CD4-positive, alpha-beta T cell (primary cell): ENCODE measurements at regions of chr9 and their contacts with region 1.

Region 1: GRCh38 chr9:124940693-124941453 is at the start of gene GOLGA1:
- DNase-seq: peak; percentile 86 to 98 (median 91)
- ATAC-seq: peak; percentile 84
- H3K4me3 ChIP-seq: peak within 1 kb of the TSS; percentile 96
- H3K4me3 Mint-ChIP-seq: peak within 1 kb of the TSS; percentile 94
- H3K27ac ChIP-seq: peak within 1 kb of the TSS; percentile 90 to 95
- H3K27ac Mint-ChIP-seq: peak within 1 kb of the TSS; percentile 90
- H3K4me1 ChIP-seq: peaks cover 20% of the 10 kb centered on the region
- H3K4me1 Mint-ChIP-seq: peaks cover 23% of the 10 kb centered on the region
- H3K27me3 ChIP-seq: no peaks in the 10 kb centered on the region
- H3K27me3 Mint-ChIP-seq: no peaks in the 10 kb centered on the region
- CTCF ChIP-seq: no peak
- total RNA-seq, gene GOLGA1: 12.9 to 22.2 TPM

Region 2: GRCh38 chr9:124771021-124771866 is 169.6 kb before region 1 on chr9 and contains the start of gene NR6A1:
- CTCF ChIA-PET with region 1: no interaction called
- POLR2A ChIA-PET with region 1: no interaction called
- intact Hi-C with region 1: loop called in 1 of 2 experiments (anchors 2 kb)
- DNase-seq: peak; percentile 81 to 97 (median 90)
- ATAC-seq: peak; percentile 88
- H3K4me3 ChIP-seq: peak within 1 kb of the TSS; percentile 59
- H3K4me3 Mint-ChIP-seq: peak within 1 kb of the TSS; percentile 90
- H3K27ac ChIP-seq: no peak within 1 kb of the TSS
- H3K27ac Mint-ChIP-seq: peak within 1 kb of the TSS; percentile 32
- H3K4me1 ChIP-seq: peaks cover 32% of the 10 kb centered on the region
- H3K4me1 Mint-ChIP-seq: peaks cover 39% of the 10 kb centered on the region
- H3K27me3 ChIP-seq: peaks cover 34 to 71% of the 10 kb centered on the region in 2 experiments
- H3K27me3 Mint-ChIP-seq: peaks cover 87% of the 10 kb centered on the region
- CTCF ChIP-seq: no peak
- total RNA-seq, gene NR6A1: not detected

Region 3: DNA sequence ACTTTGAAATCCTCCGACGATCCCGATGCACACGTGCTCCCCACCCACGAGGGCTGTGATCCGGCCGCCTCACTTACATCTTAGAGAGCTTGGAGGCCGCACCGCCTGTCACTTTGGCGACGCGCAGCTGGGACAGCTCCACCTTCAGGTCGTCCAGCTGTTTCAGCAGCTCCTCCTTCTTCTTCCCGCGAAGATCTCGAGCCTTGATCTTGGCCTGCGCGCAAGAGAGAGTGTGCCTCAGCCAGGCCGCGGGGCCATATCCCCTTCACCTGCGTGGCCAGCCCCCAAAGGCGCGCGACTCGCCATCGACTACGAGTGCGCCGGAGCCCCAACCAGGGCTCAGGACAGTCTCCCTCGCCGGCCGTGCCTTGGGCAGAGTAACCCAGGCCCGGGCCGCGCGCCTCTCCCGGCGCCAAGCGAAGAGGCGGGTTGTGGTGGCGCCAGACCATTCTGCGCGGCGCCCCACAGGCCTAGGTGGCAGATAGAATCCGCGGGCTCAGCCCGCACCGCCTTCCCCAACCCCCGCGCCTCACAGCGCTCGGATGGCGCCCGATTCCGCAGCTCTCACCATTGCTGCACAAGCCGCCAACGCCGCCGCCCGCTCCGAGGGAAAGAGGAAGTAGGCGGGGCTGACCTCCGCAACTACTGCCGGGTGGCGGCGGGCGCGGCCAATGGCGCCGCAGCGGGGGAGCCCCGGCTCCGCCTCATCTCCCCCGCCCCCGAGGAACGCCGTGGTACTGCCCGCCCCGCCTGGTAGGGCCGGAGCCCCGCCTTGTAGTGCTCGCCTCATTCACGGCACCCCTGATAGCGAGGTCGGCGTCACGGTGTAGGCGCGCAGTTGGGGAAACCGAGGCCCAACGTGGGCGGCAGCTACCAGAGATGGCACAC is 79.3 kb before region 1 on chr9 and contains the starts of genes ARPC5L and RPL35:
- CTCF ChIA-PET with region 1: no interaction called
- POLR2A ChIA-PET with region 1: interaction called, 12 read pairs
- intact Hi-C with region 1: loop called in 1 of 2 experiments (anchors 5 kb)
- DNase-seq: peak; percentile 91 to 98 (median 95)
- ATAC-seq: peak; percentile 92
- H3K4me3 ChIP-seq: peak within 1 kb of the TSS; percentile 89
- H3K4me3 Mint-ChIP-seq: peak within 1 kb of the TSS; percentile 96
- H3K27ac ChIP-seq: peak within 1 kb of the TSS; percentile 89 to 92
- H3K27ac Mint-ChIP-seq: peak within 1 kb of the TSS; percentile 92
- H3K4me1 ChIP-seq: peaks cover 46% of the 10 kb centered on the region
- H3K4me1 Mint-ChIP-seq: peaks cover 38% of the 10 kb centered on the region
- H3K27me3 ChIP-seq: no peaks in the 10 kb centered on the region
- H3K27me3 Mint-ChIP-seq: no peaks in the 10 kb centered on the region
- CTCF ChIP-seq: peak; percentile 23
- total RNA-seq, gene ARPC5L: 36.8 to 37.0 TPM
- total RNA-seq, gene RPL35: 2,088 to 2,142 TPM

Region 4: GRCh38 chr9:124868511-124869465 is 72.1 kb before region 1 on chr9:
- CTCF ChIA-PET with region 1: no interaction called
- POLR2A ChIA-PET with region 1: interaction called, 3 read pairs
- intact Hi-C with region 1: loop called (anchors 2 to 5 kb)
- DNase-seq: peak; percentile 76 to 95 (median 87)
- ATAC-seq: peak; percentile 75
- H3K4me3 ChIP-seq: peak overlapping the region; percentile 84
- H3K4me3 Mint-ChIP-seq: peak overlapping the region; percentile 92
- H3K27ac ChIP-seq: peak overlapping the region; percentile 93 to 96
- H3K27ac Mint-ChIP-seq: peak overlapping the region; percentile 92
- H3K4me1 ChIP-seq: peaks cover 58% of the 10 kb centered on the region
- H3K4me1 Mint-ChIP-seq: peaks cover 56% of the 10 kb centered on the region
- H3K27me3 ChIP-seq: no peaks in the 10 kb centered on the region
- H3K27me3 Mint-ChIP-seq: no peaks in the 10 kb centered on the region
- CTCF ChIP-seq: no peak

Region 5: DNA sequence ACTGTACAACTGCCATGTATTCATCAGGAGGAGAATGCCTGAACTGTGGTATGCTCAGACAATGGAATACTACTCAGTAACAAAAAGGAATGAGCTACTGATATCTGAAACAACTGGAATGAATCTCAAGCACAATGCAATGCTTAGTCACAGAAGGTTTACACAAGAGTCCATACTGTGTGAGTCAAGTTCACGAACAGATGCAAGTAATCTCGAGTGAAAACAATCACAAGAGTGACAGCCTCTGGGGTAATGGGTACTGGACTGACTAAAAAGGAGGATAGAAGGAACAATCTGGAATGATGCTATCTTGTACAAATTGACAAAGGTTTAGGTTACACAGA is 19.5 kb after region 1 on chr9:
- CTCF ChIA-PET with region 1: no interaction called
- POLR2A ChIA-PET with region 1: interaction called, 108 read pairs
- intact Hi-C with region 1: loop called in 1 of 2 experiments (anchors 1 kb)
- DNase-seq: no peak
- ATAC-seq: no peak
- H3K4me3 ChIP-seq: no peak overlapping the region
- H3K4me3 Mint-ChIP-seq: no peak overlapping the region
- H3K27ac ChIP-seq: no peak overlapping the region
- H3K27ac Mint-ChIP-seq: no peak overlapping the region
- H3K4me1 ChIP-seq: peaks cover 19% of the 10 kb centered on the region
- H3K4me1 Mint-ChIP-seq: peaks cover 19% of the 10 kb centered on the region
- H3K27me3 ChIP-seq: no peaks in the 10 kb centered on the region
- H3K27me3 Mint-ChIP-seq: no peaks in the 10 kb centered on the region
- CTCF ChIP-seq: no peak

Region 6: DNA sequence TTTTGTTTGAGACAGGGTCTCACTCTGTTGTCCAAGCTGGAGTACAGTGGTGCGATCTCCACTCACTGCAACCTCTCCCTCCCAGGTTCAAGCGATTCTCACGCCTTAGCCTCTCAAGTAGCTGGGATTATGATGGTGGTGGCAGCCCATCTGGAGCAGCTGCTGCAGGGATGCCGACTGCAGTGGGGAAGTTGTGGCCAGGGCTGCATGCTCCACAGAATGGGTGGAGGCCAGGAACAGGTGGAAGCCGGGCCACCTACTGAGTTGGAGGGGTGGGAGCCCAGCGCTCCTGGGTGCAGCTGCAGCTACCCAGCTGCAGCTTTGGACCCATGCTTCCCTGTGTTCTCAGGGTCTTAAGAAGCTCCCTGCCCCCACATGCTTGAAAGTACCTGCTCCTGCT is 102.8 kb after region 1 on chr9:
- CTCF ChIA-PET with region 1: no interaction called
- POLR2A ChIA-PET with region 1: no interaction called
- intact Hi-C with region 1: no loop called
- DNase-seq: peak in 1 of 14 experiments; percentile 7
- ATAC-seq: no peak
- H3K4me3 ChIP-seq: no peak overlapping the region
- H3K4me3 Mint-ChIP-seq: no peak overlapping the region
- H3K27ac ChIP-seq: no peak overlapping the region
- H3K27ac Mint-ChIP-seq: no peak overlapping the region
- H3K4me1 ChIP-seq: no peaks in the 10 kb centered on the region
- H3K4me1 Mint-ChIP-seq: no peaks in the 10 kb centered on the region
- H3K27me3 ChIP-seq: no peaks in the 10 kb centered on the region
- H3K27me3 Mint-ChIP-seq: no peaks in the 10 kb centered on the region
- CTCF ChIP-seq: no peak

Region 7: GRCh38 chr9:125126019-125126746 is 185.3 kb after region 1 on chr9:
- CTCF ChIA-PET with region 1: no interaction called
- POLR2A ChIA-PET with region 1: interaction called, 12 read pairs
- intact Hi-C with region 1: no loop called
- DNase-seq: peak; percentile 66 to 94 (median 78)
- ATAC-seq: peak; percentile 99
- H3K4me3 ChIP-seq: no peak overlapping the region
- H3K4me3 Mint-ChIP-seq: peak overlapping the region; percentile 83
- H3K27ac ChIP-seq: peak overlapping the region in 1 of 2 donors; percentile 6
- H3K27ac Mint-ChIP-seq: peak overlapping the region; percentile 89
- H3K4me1 ChIP-seq: peaks cover 30% of the 10 kb centered on the region
- H3K4me1 Mint-ChIP-seq: peaks cover 44% of the 10 kb centered on the region
- H3K27me3 ChIP-seq: no peaks in the 10 kb centered on the region
- H3K27me3 Mint-ChIP-seq: no peaks in the 10 kb centered on the region
- CTCF ChIP-seq: no peak

Region 8: DNA sequence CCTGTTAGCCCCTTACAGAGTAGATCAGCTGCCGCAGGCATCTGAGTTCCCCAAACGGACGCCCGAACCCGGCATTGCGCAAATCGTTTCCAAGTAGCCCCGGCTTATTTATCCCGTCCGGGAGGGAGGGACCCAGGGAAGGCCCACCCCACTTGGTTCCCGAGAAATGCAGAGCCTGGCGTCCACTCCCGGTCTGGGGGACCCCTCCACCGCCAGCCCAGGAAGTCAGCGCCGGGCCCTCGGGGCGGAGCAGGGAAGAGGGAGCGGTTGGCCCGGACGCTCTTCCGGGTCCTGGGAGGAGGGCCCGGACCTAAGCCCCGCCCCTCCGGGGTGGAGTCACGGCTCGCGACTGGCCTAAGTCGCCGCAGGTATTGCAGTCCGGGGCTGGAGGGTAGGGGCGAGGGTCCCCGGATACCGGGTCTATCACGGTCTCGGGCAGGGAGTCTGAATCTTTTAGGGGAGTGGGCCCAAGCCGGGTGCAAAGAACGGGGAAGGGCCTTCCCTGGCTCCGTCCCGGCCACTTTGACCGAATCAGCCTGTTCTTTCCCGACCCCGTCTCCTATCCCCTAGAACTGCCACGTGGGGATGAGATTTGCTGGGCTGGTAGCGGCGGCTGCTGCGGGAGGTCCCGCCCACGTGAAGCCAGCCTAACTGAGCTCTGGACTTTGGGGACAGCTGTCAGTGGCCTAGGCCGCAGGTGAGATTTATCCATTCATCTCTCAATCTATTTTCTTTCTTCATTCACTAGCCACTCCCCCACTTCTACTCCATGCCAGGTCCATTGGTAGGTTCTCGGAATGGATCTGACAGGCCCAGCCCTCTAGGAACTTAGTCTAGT is 259.6 kb after region 1 on chr9 and contains the start of gene RABEPK:
- CTCF ChIA-PET with region 1: no interaction called
- POLR2A ChIA-PET with region 1: interaction called, 6 read pairs
- intact Hi-C with region 1: loop called in 1 of 2 experiments (anchors 5 kb)
- DNase-seq: peak; percentile 79 to 94 (median 88)
- ATAC-seq: peak; percentile 94
- H3K4me3 ChIP-seq: peak within 1 kb of the TSS; percentile 92
- H3K4me3 Mint-ChIP-seq: peak within 1 kb of the TSS; percentile 93
- H3K27ac ChIP-seq: peak within 1 kb of the TSS; percentile 63 to 91
- H3K27ac Mint-ChIP-seq: peak within 1 kb of the TSS; percentile 79
- H3K4me1 ChIP-seq: peaks cover 54% of the 10 kb centered on the region
- H3K4me1 Mint-ChIP-seq: peaks cover 63% of the 10 kb centered on the region
- H3K27me3 ChIP-seq: no peaks in the 10 kb centered on the region
- H3K27me3 Mint-ChIP-seq: no peaks in the 10 kb centered on the region
- CTCF ChIP-seq: no peak
- total RNA-seq, gene RABEPK: 6.8 to 8.3 TPM